Common myeloid progenitor, CD34-positive (primary cell): ENCODE measurements at regions of chr10 and their contacts with region 1.

Region 1: DNA sequence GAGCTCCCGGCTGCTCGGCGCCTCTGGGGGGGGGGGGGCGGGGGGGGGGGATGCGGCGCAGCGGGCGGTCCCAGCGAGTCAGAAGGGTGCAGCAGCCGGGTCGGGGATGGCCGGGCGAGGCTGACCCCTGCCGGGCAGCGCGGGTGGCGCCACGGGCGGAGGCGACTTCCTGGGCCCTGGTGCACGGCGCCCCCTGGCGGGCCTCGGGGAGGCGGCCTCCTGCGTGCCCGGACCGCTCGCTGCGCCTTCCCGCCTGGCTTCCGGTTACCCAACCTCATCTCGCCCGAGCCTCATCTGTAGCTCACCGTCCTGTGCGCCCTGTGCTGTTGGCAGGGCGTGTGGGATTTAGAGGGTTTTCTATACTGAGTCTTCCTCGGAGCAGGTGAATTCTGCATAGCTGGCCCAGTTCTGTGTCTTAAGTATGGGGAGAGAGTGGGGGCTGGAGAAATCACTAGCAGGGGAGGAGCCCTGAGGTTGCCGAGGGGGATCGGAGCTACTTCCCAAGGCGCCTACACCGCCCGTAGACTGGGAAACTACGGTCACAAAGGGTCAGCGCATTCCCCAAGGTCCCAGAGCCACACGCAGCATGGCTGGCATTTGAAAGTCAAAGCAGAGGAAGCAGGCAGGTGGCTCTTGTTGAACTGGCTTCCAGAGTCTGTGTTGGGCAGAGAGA is 28.3 kb upstream of the WDFY4 start:
- DNase-seq: peak; percentile 91 to 94 (median 94)
- H3K4me3 ChIP-seq: peak overlapping the region; percentile 30 to 79 (median 69)
- H3K27ac ChIP-seq: no peak overlapping the region
- H3K4me1 ChIP-seq: peaks cover 0 to 26% (median 21%) of the 10 kb centered on the region in 4 experiments
- H3K27me3 ChIP-seq: peaks cover 0 to 6% (median 2%) of the 10 kb centered on the region in 5 experiments

Region 2: DNA sequence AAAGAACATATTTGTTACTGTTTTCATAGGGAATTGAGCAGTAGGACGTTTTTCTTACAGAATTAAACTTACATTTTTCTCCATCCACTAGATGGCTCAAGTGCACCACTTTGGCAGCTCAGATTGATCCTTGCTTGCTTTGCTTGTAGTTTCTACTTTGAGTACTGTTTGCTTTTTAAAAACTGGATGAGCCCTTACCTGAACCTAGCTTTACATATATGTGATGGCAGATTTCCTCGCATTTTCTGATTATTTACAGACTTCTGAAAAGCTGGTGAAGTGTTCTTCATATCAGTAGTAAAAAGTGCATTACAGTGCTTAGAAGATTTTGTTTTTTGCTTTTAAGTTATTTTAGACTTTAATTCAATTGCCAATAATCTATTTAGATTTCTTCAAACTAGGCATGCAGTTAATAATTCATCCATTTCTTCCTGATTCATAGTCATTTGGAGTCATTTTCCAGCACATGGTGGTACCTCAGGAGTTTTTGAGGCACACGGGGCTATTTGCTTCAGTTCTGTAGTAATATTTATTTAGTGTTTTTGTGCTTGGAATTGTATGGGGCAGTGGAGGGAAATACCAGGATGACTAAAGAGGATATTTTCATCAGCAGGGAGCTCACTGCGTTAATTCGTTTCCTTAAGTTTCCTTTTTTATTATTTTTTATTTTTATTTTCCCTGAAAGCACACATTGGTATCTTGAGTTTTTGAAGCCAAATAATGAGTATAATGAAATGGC is 292.6 kb before region 1 on chr10:
- CTCF ChIA-PET with region 1: interaction called, 32 read pairs
- POLR2A ChIA-PET with region 1: no interaction called
- DNase-seq: peak; percentile 81 to 89 (median 88)
- H3K4me3 ChIP-seq: peak overlapping the region in 2 of 7 experiments; percentile 3 to 6
- H3K27ac ChIP-seq: peak overlapping the region in 1 of 2 experiments; percentile 57
- H3K4me1 ChIP-seq: peaks cover 4 to 27% (median 16%) of the 10 kb centered on the region in 4 experiments
- H3K27me3 ChIP-seq: no peaks in the 10 kb centered on the region

Region 3: GRCh38 chr10:48541144-48541795 is 115.1 kb before region 1 on chr10:
- CTCF ChIA-PET with region 1: interaction called, 381 read pairs
- POLR2A ChIA-PET with region 1: no interaction called
- DNase-seq: no peak
- H3K4me3 ChIP-seq: no peak overlapping the region
- H3K27ac ChIP-seq: no peak overlapping the region
- H3K4me1 ChIP-seq: no peaks in the 10 kb centered on the region
- H3K27me3 ChIP-seq: no peaks in the 10 kb centered on the region

Region 4: DNA sequence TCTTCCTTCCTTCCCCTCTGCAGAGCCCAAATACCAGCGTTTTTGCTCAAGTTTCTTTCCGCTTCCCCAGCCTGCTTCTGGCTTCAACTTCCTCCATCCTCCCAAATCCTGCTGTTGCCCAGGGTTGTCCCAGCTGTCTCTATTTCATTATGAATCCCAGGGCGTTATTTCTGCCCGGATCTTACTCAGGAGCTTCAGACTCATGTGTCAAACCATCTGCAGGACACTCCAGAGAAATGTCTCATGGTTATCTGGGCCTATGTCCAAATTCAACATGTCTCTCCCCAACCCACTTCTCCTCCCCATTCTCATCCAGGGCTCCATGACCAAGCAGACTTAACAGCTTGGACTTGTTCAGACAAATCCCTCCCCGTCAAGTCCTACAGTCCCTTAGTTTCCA is 67.1 kb before region 1 on chr10:
- CTCF ChIA-PET with region 1: interaction called, 13 read pairs
- POLR2A ChIA-PET with region 1: no interaction called
- DNase-seq: no peak
- H3K4me3 ChIP-seq: no peak overlapping the region
- H3K27ac ChIP-seq: no peak overlapping the region
- H3K4me1 ChIP-seq: no peaks in the 10 kb centered on the region
- H3K27me3 ChIP-seq: no peaks in the 10 kb centered on the region

Region 5: GRCh38 chr10:48634198-48634983 is 22.0 kb before region 1 on chr10:
- CTCF ChIA-PET with region 1: interaction called, 44 read pairs
- POLR2A ChIA-PET with region 1: no interaction called
- DNase-seq: peak; percentile 87 to 93 (median 92)
- H3K4me3 ChIP-seq: peak overlapping the region in 3 of 7 experiments; percentile 8 to 39 (median 14)
- H3K27ac ChIP-seq: peak overlapping the region in 1 of 2 experiments; percentile 60
- H3K4me1 ChIP-seq: peaks cover 8 to 58% (median 44%) of the 10 kb centered on the region in 4 experiments
- H3K27me3 ChIP-seq: no peaks in the 10 kb centered on the region

Region 6: DNA sequence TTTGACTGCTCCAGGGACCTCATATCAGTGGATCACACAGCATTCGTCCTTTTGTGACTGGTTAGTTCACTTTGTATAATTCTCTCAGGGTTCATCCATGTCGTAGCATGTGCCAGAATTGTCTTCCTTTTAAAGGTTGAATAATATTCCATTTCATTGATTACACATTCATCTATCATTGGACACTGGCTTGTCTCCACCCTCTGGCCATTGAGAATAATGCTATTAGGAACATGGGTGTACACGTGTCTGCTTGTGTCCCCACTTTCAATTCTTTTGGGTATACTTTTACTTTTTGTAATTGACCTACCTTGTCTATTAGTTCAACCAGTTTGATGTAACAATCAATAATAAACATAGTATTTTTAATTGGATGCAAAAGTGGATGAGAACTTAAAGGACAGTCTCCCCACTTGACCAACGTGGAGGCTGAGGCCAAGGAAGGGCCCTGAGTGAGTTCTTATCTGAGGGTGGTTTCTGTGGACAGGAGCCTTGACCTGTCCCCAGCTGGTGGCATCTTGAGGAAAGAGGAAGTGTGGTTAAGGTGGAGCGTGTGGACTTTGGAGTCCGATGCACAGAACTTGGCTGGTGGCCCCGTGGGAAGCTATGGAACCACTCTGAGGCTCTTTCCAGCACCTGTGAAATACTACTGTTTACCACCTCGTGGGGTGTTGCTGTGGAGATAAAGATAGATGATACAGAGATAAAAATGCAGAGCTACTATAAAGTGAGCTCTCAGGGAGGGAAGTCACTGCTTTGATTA is 44.9 kb after region 1 on chr10:
- CTCF ChIA-PET with region 1: interaction called, 39 read pairs
- POLR2A ChIA-PET with region 1: no interaction called
- DNase-seq: peak in 2 of 3 donors; percentile 44 to 64
- H3K4me3 ChIP-seq: no peak overlapping the region
- H3K27ac ChIP-seq: no peak overlapping the region
- H3K4me1 ChIP-seq: peaks cover 0 to 28% (median 17%) of the 10 kb centered on the region in 4 experiments
- H3K27me3 ChIP-seq: no peaks in the 10 kb centered on the region

Region 7: GRCh38 chr10:48800007-48800675 is 143.8 kb after region 1 on chr10:
- CTCF ChIA-PET with region 1: no interaction called
- POLR2A ChIA-PET with region 1: no interaction called
- DNase-seq: peak in 2 of 3 donors; percentile 35 to 38
- H3K4me3 ChIP-seq: peak overlapping the region in 2 of 7 experiments; percentile 13 to 29
- H3K27ac ChIP-seq: no peak overlapping the region
- H3K4me1 ChIP-seq: peaks cover 0 to 44% (median 21%) of the 10 kb centered on the region in 4 experiments
- H3K27me3 ChIP-seq: no peaks in the 10 kb centered on the region